ENCODE measurements at regions of chr19 and their contacts with region 1.

Region 1: DNA sequence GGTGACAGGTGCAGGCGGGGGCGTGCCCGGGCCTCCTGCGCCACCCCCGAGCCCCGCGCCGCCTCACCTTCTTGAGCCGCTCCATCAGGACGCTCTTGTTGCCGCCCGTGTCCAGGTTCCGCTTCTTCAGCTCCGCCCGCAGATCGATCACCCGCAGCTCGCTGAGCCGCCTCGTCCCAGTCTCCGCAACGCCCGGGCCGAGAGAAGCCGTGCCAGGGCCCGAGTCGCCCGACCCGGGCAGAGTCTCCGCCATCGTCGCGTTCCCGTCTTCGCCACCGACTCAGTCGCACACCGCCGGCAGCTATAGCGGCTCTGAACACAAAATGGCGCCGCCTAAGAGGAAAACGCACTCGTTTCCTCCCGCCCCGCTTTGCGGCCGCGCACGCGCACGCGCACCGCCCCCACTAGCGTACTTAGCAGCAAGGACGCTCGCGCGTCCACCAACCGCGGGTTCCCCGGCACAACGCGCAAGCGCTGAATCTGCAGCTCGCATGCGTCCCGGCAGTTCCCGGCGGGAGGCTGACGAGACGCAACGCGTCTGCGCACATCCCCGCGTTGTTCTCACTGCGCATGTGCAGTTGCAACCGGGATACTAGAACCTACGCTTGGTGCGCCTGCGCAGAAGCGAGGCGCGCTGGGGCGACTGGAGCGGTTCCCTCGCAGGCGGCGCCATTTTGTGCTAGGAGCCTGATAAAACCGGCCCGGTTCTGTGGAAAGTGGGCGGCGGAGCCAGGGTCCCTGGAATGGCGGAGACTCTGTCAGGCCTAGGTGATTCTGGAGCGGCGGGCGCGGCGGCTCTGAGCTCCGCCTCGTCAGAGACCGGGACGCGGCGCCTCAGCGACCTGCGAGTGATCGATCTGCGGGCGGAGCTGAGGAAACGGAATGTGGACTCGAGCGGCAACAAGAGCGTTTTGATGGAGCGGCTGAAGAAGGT is at the starts of genes SAFB and SAFB2:
- DNase-seq: peak; percentile 99 to 100 (median 100)
- H3K4me3 ChIP-seq: peak within 1 kb of the TSS; percentile 80 to 82
- H3K4me3 Mint-ChIP-seq: peak within 1 kb of the TSS; percentile 99 to 100 (median 100)
- H3K27ac ChIP-seq: peak within 1 kb of the TSS; percentile 97
- H3K27ac Mint-ChIP-seq: peak within 1 kb of the TSS; percentile 97 to 100 (median 100)
- H3K4me1 ChIP-seq: peaks cover 73% of the 10 kb centered on the region
- H3K4me1 Mint-ChIP-seq: peaks cover 43 to 88% (median 69%) of the 10 kb centered on the region in 4 donors
- H3K27me3 ChIP-seq: no peaks in the 10 kb centered on the region
- H3K27me3 Mint-ChIP-seq: no peaks in the 10 kb centered on the region
- total RNA-seq, gene SAFB: 202 to 211 TPM
- total RNA-seq, gene SAFB2: 257 to 263 TPM

Region 2: GRCh38 chr19:5680437-5681368 is 58.0 kb after region 1 on chr19 and contains the starts of genes HSD11B1L and MICOS13:
- CTCF ChIA-PET with region 1: interaction called, 18 read pairs
- POLR2A ChIA-PET with region 1: interaction called, 25 read pairs
- intact Hi-C with region 1: loop called (anchors 1 kb)
- DNase-seq: peak; percentile 99 to 100 (median 99)
- H3K4me3 ChIP-seq: peak within 1 kb of the TSS; percentile 62 to 96
- H3K4me3 Mint-ChIP-seq: peak within 1 kb of the TSS; percentile 87 to 98 (median 93)
- H3K27ac ChIP-seq: peak within 1 kb of the TSS; percentile 87
- H3K27ac Mint-ChIP-seq: peak within 1 kb of the TSS; percentile 94 to 100 (median 99)
- H3K4me1 ChIP-seq: peaks cover 21% of the 10 kb centered on the region
- H3K4me1 Mint-ChIP-seq: peaks cover 18 to 41% (median 26%) of the 10 kb centered on the region in 4 donors
- H3K27me3 ChIP-seq: no peaks in the 10 kb centered on the region
- H3K27me3 Mint-ChIP-seq: no peaks in the 10 kb centered on the region
- total RNA-seq, gene HSD11B1L: 3.5 to 4.8 TPM
- total RNA-seq, gene MICOS13: 40.5 to 41.1 TPM

Region 3: GRCh38 chr19:5690125-5690954 is 67.6 kb after region 1 on chr19 and contains the start of gene RPL36:
- CTCF ChIA-PET with region 1: interaction called, 18 read pairs
- POLR2A ChIA-PET with region 1: interaction called, 74 read pairs
- intact Hi-C with region 1: loop called (anchors 1 kb)
- DNase-seq: peak; percentile 97 to 99 (median 98)
- H3K4me3 ChIP-seq: peak within 1 kb of the TSS; percentile 84 to 86
- H3K4me3 Mint-ChIP-seq: peak within 1 kb of the TSS; percentile 92 to 97 (median 94)
- H3K27ac ChIP-seq: peak within 1 kb of the TSS; percentile 83
- H3K27ac Mint-ChIP-seq: peak within 1 kb of the TSS; percentile 94 to 100 (median 97)
- H3K4me1 ChIP-seq: peaks cover 36% of the 10 kb centered on the region
- H3K4me1 Mint-ChIP-seq: peaks cover 19 to 46% (median 31%) of the 10 kb centered on the region in 4 donors
- H3K27me3 ChIP-seq: no peaks in the 10 kb centered on the region
- H3K27me3 Mint-ChIP-seq: no peaks in the 10 kb centered on the region
- total RNA-seq, gene RPL36: 1,675 to 1,762 TPM